Heart right ventricle (tissue), 16 donors: ENCODE measurements at regions of chr9 and their contacts with region 1.

Region 1: DNA sequence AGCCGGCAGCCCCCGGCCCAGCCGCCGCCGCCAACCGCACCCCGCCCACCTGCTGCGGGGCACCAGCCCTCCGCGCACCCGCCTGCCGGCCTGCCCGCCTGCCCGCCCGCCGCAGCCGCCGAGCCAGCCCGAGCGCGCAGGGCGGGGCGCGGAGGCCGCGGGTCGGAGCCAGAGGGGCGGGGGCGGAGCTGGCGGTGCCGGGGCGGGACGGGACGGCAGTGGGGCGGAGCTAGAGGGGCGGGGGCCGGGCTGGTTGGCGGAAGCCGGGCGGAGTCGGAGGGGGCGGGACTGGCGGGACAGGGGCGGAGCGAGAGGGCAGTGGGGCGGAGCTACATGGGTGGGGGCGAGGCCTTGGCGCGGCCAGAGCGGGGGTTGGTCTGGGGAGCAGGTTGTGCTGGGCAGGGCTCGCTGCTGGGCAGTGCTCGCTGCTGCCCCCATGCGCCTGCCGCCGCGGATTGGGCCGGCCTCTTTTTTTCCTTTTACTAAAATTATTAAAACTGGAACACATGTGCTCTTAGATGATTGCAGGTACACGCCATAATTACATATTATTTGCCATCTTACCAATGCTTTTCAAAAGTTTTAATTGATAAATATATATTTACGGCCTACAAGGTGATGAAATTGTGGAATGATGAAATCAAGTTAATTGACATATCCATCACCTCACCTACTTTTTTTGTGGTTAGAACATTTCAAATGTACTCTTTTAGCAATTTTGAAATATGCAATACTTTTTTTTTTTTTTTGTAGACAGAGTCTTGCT is at the start of gene SH3GLB2:
- DNase-seq: peak; percentile 95 to 99
- ATAC-seq: peak; percentile 97 to 99 (median 98)
- H3K4me3 ChIP-seq: peak within 1 kb of the TSS; percentile 70 to 98 (median 81)
- H3K27ac ChIP-seq: peak within 1 kb of the TSS in 9 of 10 donors; percentile 54 to 79 (median 70)
- H3K4me1 ChIP-seq: peaks cover 0 to 40% (median 22%) of the 10 kb centered on the region in 9 donors
- H3K27me3 ChIP-seq: no peaks in the 10 kb centered on the region
- CTCF ChIP-seq: peak; percentile 84 to 98 (median 90)
- total RNA-seq, gene SH3GLB2: 25.2 to 40.5 (median 31.5) TPM

Region 2: GRCh38 chr9:128684279-128685021 is 343.9 kb before region 1 on chr9:
- intact Hi-C with region 1: no loop called
- DNase-seq: peak; percentile 71 to 72
- ATAC-seq: peak; percentile 30 to 76 (median 57)
- H3K4me3 ChIP-seq: peak overlapping the region; percentile 47 to 75 (median 58)
- H3K27ac ChIP-seq: peak overlapping the region; percentile 5 to 96 (median 72)
- H3K4me1 ChIP-seq: peaks cover 5 to 53% (median 26%) of the 10 kb centered on the region in 9 donors
- H3K27me3 ChIP-seq: no peaks in the 10 kb centered on the region
- CTCF ChIP-seq: no peak

Region 3: DNA sequence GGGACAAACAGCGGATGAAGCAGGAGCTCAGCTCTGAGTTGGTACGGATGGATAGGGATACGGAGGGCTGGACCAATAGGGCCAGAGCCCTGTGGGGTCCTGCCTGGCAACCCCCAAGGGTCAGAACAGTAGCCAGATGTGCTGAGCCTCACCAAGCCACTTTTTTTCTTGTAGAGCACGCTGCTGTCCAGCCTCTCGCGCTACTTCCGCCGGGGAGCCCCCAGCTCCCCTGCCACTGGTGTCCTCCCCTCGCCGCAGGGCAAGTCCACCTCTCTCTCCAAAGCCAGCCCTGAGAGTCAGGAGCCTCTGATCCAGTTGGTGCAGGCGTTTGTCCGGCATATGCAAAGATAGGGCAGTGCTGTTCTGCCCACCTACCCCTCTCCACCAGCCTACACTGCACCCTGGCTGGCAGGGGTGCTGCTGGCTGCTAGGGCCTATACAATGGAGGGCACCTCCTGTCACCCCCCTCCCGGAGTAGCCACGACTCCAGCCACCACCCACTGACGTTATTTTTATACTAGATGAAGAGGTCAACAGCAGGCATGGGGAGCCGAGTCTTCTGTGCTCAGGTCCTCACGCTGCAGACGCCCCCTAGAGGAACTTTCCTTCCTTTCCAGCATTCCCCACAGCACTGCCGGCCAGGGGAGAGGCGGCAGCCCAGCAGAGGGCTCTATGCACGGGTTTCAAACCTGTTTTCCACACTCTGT is 21.9 kb before region 1 on chr9:
- intact Hi-C with region 1: loop called in 1 of 10 experiments (anchors 1 kb)
- DNase-seq: peak; percentile 63 to 75
- ATAC-seq: peak; percentile 81 to 91 (median 84)
- H3K4me3 ChIP-seq: no peak overlapping the region
- H3K27ac ChIP-seq: peak overlapping the region in 8 of 10 donors; percentile 18 to 69 (median 47)
- H3K4me1 ChIP-seq: peaks cover 0 to 25% (median 15%) of the 10 kb centered on the region in 9 donors
- H3K27me3 ChIP-seq: no peaks in the 10 kb centered on the region
- CTCF ChIP-seq: peak; percentile 59 to 94 (median 86)

Region 4: GRCh38 chr9:129071526-129072131 is 43.3 kb after region 1 on chr9:
- intact Hi-C with region 1: no loop called
- DNase-seq: no peak
- ATAC-seq: no peak
- H3K4me3 ChIP-seq: no peak overlapping the region
- H3K27ac ChIP-seq: no peak overlapping the region
- H3K4me1 ChIP-seq: peaks cover 0 to 23% (median 14%) of the 10 kb centered on the region in 9 donors
- H3K27me3 ChIP-seq: no peaks in the 10 kb centered on the region
- CTCF ChIP-seq: no peak